ENCODE measurements at regions of chr2 and their contacts with region 1.

Region 1: GRCh38 chr2:60439219-60439974 is 114.1 kb downstream of the BCL11A start:
- DNase-seq: no peak
- H3K4me3 ChIP-seq: no peak overlapping the region
- H3K27ac ChIP-seq: no peak overlapping the region
- H3K4me1 ChIP-seq: peaks cover 0 to 6% (median 2%) of the 10 kb centered on the region in 4 experiments; a peak in 6 of 7 replicates
- H3K27me3 ChIP-seq: no peaks in the 10 kb centered on the region
- CTCF ChIP-seq: peak; percentile 40 to 65 (median 64)
- EP300 ChIP-seq: no peak
- POLR2A ChIP-seq: no peak
- RAD21 ChIP-seq: peak; percentile 27 to 50; a peak in 3 of 4 replicates

Region 2: DNA sequence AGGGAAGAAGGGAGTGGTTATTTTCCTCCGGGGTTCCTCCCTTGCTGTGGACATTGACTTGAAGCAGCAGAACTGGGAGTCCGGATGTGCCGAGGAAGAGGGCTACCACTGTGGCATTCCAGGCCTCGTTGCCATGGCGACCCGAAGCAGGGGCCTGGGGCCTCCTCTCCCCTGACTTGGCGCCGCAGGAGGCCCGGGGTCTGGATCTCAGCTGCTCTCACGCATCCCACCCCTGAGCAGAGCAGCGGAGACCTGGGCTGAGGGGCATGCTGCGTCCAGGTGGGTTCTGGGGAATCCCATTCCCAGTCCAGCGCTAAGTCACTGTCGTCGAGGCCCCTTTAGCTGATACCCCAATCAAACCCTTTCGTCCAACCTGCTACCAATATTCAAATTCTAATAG is 13.9 kb after region 1 on chr2:
- CTCF ChIA-PET with region 1: interaction called, 25 read pairs
- POLR2A ChIA-PET with region 1: no interaction called
- DNase-seq: peak; percentile 62 to 90
- H3K4me3 ChIP-seq: peak overlapping the region in 1 of 4 experiments; percentile 37; a peak in 1 of 8 replicates
- H3K27ac ChIP-seq: peak overlapping the region; percentile 11; the same call in 1 of the 2 replicates
- H3K4me1 ChIP-seq: peaks cover 5 to 28% (median 19%) of the 10 kb centered on the region in 4 experiments
- H3K27me3 ChIP-seq: no peaks in the 10 kb centered on the region
- CTCF ChIP-seq: no peak
- EP300 ChIP-seq: peak in 1 of 2 experiments; percentile 72; a peak in 1 of 3 replicates
- POLR2A ChIP-seq: peak in 1 of 2 experiments; percentile 63; a peak in 2 of 3 replicates
- RAD21 ChIP-seq: peak; percentile 8 to 19; a peak in 3 of 4 replicates

Region 3: DNA sequence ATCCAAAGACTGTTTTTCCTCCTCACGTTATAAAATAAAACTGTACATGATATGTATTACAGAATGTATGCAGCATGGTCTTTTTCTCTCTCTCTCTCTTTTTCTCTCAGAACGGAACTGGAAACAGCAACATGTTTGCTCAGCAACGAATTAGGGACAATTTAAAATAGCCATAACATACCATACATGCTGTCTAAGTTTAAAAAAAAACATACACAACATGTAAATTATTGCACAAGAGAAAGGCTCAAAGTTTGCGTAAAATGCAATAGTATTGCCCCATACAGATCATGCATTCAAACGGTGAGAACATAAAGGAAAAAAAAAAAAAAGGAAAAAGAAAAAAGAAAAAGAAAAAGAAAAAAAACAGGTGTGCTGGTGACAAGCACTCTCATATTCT is 20.5 kb after region 1 on chr2:
- CTCF ChIA-PET with region 1: interaction called, 10 read pairs
- POLR2A ChIA-PET with region 1: no interaction called
- DNase-seq: no peak
- H3K4me3 ChIP-seq: no peak overlapping the region
- H3K27ac ChIP-seq: no peak overlapping the region
- H3K4me1 ChIP-seq: peaks cover 0 to 1% (median 0%) of the 10 kb centered on the region in 4 experiments; a peak in 2 of 7 replicates
- H3K27me3 ChIP-seq: no peaks in the 10 kb centered on the region
- CTCF ChIP-seq: no peak
- EP300 ChIP-seq: no peak
- POLR2A ChIP-seq: no peak
- RAD21 ChIP-seq: no peak

Region 4: DNA sequence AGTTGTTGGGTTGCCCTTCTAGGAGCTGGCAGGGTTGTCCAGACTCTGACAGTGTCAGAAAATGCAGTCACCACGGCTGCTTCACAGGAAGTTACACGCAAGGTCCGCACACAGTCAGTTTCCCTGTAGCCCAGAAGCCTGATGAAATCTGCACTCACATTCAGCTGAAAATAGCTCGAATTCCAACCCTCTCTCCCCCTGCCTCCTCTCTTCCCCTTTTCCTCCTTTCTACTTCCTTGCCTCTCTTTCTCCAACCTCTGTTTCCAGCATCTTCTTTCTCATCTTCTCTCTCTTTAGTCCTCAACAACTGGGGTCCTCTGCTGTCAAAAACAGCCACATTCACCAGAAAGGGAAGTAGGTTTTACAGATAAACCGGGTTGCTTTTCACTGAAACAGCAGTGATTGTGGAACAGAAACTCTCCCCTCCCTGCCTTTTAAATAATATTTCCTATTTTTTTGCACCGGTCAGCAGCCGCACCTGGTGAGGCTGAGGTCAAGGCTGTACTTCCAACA is 44.8 kb after region 1 on chr2:
- CTCF ChIA-PET with region 1: interaction called, 13 read pairs
- POLR2A ChIA-PET with region 1: no interaction called
- DNase-seq: no peak
- H3K4me3 ChIP-seq: no peak overlapping the region
- H3K27ac ChIP-seq: no peak overlapping the region
- H3K4me1 ChIP-seq: peaks cover 10 to 23% (median 13%) of the 10 kb centered on the region in 4 experiments
- H3K27me3 ChIP-seq: no peaks in the 10 kb centered on the region; a peak in 2 of 7 replicates
- CTCF ChIP-seq: no peak
- EP300 ChIP-seq: no peak
- POLR2A ChIP-seq: no peak
- RAD21 ChIP-seq: no peak

Region 5: GRCh38 chr2:60504049-60504448 is 64.7 kb after region 1 on chr2:
- CTCF ChIA-PET with region 1: interaction called, 16 read pairs
- POLR2A ChIA-PET with region 1: no interaction called
- DNase-seq: no peak
- H3K4me3 ChIP-seq: no peak overlapping the region
- H3K27ac ChIP-seq: no peak overlapping the region
- H3K4me1 ChIP-seq: peaks cover 6 to 19% (median 14%) of the 10 kb centered on the region in 4 experiments
- H3K27me3 ChIP-seq: no peaks in the 10 kb centered on the region
- CTCF ChIP-seq: peak in 2 of 3 experiments; percentile 20 to 29; a peak in 2 of 4 replicates
- EP300 ChIP-seq: no peak
- POLR2A ChIP-seq: no peak
- RAD21 ChIP-seq: peak; percentile 33 to 57; a peak in 3 of 4 replicates

Region 6: DNA sequence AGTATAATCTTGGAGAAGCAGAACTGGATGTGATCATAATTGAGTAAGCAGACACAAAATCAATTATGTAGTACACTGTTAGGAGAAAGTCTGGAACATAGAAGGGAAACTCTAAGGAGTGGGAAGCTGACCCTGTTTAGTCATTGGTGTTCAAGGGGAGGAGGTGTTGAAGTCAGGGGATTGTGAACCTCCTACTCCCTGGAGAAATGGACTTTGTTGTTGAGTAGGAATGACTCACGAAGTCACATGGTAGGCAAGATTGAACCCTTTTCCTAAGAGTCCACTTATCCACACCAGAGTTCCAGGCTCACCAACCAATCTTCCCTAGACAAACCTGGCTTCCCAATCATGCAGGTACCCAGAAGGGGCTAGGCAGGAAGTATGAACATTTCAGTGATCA is 195.0 kb after region 1 on chr2:
- CTCF ChIA-PET with region 1: no interaction called
- POLR2A ChIA-PET with region 1: no interaction called
- DNase-seq: no peak
- H3K4me3 ChIP-seq: no peak overlapping the region
- H3K27ac ChIP-seq: no peak overlapping the region
- H3K4me1 ChIP-seq: no peaks in the 10 kb centered on the region; a peak in 1 of 7 replicates
- H3K27me3 ChIP-seq: no peaks in the 10 kb centered on the region
- CTCF ChIP-seq: no peak
- EP300 ChIP-seq: no peak
- POLR2A ChIP-seq: no peak
- RAD21 ChIP-seq: no peak